Calu3 (cell line): ENCODE measurements at regions of chr2 and their contacts with region 1.

Region 1: GRCh38 chr2:227862227-227862740 is 9.1 kb upstream of the DAW1 start:
- DNase-seq: peak; percentile 63
- H3K4me3 Mint-ChIP-seq: no peak overlapping the region
- H3K27ac Mint-ChIP-seq: peak overlapping the region; percentile 69
- H3K4me1 Mint-ChIP-seq: peaks cover 38% of the 10 kb centered on the region
- H3K27me3 Mint-ChIP-seq: no peaks in the 10 kb centered on the region
- CTCF ChIP-seq: peak; percentile 49

Region 2: DNA sequence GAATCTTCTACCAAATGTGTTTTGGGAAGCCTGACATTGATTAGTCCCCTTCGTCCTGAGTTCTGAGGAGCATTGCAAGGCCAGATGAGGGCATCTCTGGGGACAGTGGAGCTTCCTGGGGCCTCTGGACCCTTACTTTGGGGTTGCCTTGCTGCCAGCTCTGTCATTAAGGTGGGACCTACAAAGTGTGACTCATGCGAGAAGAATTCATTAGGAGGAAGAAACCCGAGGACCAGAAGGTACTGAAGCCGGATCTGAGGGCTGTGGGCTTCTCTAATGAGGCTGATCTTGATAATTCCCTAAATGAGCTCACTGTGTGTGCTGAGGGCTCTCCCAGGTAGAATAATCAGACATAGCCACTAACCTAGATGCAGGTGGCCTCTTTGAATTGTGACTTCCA is 264.3 kb before region 1 on chr2:
- CTCF ChIA-PET with region 1: no interaction called
- intact Hi-C with region 1: no loop called
- DNase-seq: peak; percentile 39
- H3K4me3 Mint-ChIP-seq: no peak overlapping the region
- H3K27ac Mint-ChIP-seq: no peak overlapping the region
- H3K4me1 Mint-ChIP-seq: peaks cover 8% of the 10 kb centered on the region
- H3K27me3 Mint-ChIP-seq: no peaks in the 10 kb centered on the region
- CTCF ChIP-seq: no peak

Region 3: DNA sequence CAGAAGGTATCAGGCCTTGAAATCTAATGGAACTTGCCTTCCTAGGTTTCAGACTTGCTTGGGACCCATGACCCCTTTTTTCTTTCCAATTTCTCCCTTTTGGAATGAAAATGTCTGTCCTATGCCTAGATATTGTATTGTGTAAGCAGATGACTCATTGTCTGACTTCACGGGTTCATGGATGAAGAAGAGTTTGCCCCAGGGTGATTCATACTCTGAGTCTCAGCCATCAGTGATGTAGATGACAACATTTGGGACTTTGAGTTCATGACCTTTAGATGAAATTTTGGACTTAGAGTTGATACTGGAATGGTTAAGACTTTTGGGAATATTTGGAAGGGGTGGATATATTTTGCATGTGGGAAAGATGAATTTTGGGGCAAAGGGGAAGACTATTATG is 206.8 kb before region 1 on chr2:
- CTCF ChIA-PET with region 1: interaction called, 13 read pairs
- intact Hi-C with region 1: loop called (anchors 1 kb)
- DNase-seq: peak; percentile 9
- H3K4me3 Mint-ChIP-seq: no peak overlapping the region
- H3K27ac Mint-ChIP-seq: peak overlapping the region; percentile 14
- H3K4me1 Mint-ChIP-seq: peaks cover 25% of the 10 kb centered on the region
- H3K27me3 Mint-ChIP-seq: no peaks in the 10 kb centered on the region
- CTCF ChIP-seq: no peak

Region 4: DNA sequence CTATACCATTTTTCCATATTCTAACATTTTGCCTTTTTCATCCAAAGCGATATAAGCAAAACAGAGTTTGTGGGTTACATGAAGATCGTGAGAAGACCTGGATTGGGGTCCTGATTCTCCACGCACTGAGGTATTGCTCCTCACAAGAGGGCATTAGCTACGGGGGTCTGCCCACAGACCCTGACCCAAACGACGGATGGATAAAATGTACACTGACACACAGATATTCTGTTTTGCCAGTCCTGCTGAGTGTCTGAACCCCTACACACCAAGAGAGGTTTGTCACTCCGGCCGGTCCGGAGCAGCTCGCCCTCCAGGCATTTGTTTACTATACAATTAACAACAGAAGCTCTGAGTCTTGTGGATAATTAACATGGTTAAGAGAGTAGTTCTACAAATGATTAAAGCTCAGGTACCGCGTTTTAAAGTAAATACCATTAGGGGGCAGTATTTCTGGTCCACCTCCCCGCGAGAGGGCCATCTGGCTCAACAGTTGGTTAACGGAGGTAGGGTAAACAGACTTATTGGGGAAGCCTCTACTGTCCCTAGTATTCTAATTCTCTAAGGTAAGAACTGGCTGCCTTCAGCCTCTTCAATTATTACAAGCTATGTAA is 88.2 kb before region 1 on chr2:
- CTCF ChIA-PET with region 1: interaction called, 17 read pairs
- intact Hi-C with region 1: loop called (anchors 2 kb)
- DNase-seq: peak; percentile 36
- H3K4me3 Mint-ChIP-seq: no peak overlapping the region
- H3K27ac Mint-ChIP-seq: no peak overlapping the region
- H3K4me1 Mint-ChIP-seq: peaks cover 38% of the 10 kb centered on the region
- H3K27me3 Mint-ChIP-seq: no peaks in the 10 kb centered on the region
- CTCF ChIP-seq: peak; percentile 65

Region 5: GRCh38 chr2:227829337-227829736 is 32.9 kb before region 1 on chr2:
- CTCF ChIA-PET with region 1: no interaction called
- intact Hi-C with region 1: no loop called
- DNase-seq: no peak
- H3K4me3 Mint-ChIP-seq: no peak overlapping the region
- H3K27ac Mint-ChIP-seq: no peak overlapping the region
- H3K4me1 Mint-ChIP-seq: peaks cover 15% of the 10 kb centered on the region
- H3K27me3 Mint-ChIP-seq: peaks cover 17% of the 10 kb centered on the region
- CTCF ChIP-seq: no peak